Ovary (tissue), 10 donors: ENCODE measurements at regions of chr19 and their contacts with region 1.

Region 1: GRCh38 chr19:45754323-45754722 is 14.7 kb downstream of the SIX5 start:
- DNase-seq: no peak
- H3K4me3 ChIP-seq: no peak overlapping the region
- H3K27ac ChIP-seq: no peak overlapping the region
- H3K4me1 ChIP-seq: no peaks in the 10 kb centered on the region
- H3K27me3 ChIP-seq: no peaks in the 10 kb centered on the region
- CTCF ChIP-seq: no peak
- EP300 ChIP-seq: no peak
- POLR2A ChIP-seq: no peak

Region 2: GRCh38 chr19:45792470-45793177 is 38.3 kb after region 1 on chr19 and contains the start of gene DMWD:
- intact Hi-C with region 1: loop called in 1 of 4 experiments (anchors 1 kb)
- DNase-seq: peak; percentile 100
- H3K4me3 ChIP-seq: peak within 1 kb of the TSS; percentile 68
- H3K27ac ChIP-seq: peak within 1 kb of the TSS in 1 of 2 donors; percentile 82
- H3K4me1 ChIP-seq: peaks cover 6% of the 10 kb centered on the region
- H3K27me3 ChIP-seq: no peaks in the 10 kb centered on the region
- CTCF ChIP-seq: peak in 1 of 3 donors; percentile 14
- EP300 ChIP-seq: peak; percentile 28
- POLR2A ChIP-seq: peak; percentile 62
- total RNA-seq, gene DMWD: 28.4 to 85.4 (median 61.1) TPM